Stomach (tissue), 19 donors: ENCODE measurements at regions of chr4 and their contacts with region 1.

Region 1: DNA sequence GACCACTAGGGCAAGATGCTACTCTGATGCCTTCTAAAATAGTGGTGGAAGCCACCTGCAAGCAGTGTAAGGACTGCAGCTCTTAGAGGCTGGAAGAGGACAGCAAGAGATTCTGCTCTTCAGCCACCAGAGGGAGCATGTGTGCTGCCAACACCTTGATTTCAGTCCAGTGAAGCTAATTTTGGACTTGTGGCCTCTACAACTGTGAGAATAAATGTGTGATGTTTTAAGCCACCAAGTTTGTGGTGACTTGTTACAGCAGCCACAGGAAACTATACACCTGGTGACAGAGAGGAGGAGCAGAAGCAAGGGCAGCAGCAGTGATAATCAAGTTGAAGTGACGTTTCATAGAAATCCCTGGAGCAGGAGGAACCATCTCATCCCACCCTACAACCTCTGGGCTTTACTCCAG is 55.9 kb downstream of the FGFBP1 start:
- DNase-seq: peak; percentile 39 to 90
- H3K4me3 ChIP-seq: no peak overlapping the region
- H3K27ac ChIP-seq: no peak overlapping the region
- H3K4me1 ChIP-seq: no peaks in the 10 kb centered on the region
- H3K27me3 ChIP-seq: no peaks in the 10 kb centered on the region
- CTCF ChIP-seq: peak in 5 of 7 experiments; percentile 62 to 84 (median 84)
- EP300 ChIP-seq: no peak
- POLR2A ChIP-seq: no peak

Region 2: DNA sequence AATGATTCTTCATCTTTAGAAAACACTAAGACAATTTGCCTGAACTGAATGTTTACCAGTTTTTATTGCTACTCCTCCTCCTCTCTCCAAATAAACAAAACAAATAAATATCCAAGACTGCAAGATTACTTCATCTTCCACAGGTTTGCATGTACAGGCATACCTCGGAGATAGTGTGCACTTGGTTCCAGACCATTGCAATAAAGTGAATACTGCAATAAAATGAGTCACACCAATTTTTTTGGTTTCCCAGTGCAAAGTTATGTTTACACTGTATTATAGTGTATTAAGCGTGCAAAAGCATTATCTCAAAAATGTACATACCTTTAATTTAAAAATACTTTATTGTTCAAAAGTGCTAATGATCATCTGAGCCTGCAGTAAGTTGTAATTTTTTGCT is 280.8 kb before region 1 on chr4:
- intact Hi-C with region 1: no loop called
- DNase-seq: no peak
- H3K4me3 ChIP-seq: no peak overlapping the region
- H3K27ac ChIP-seq: no peak overlapping the region
- H3K4me1 ChIP-seq: peaks cover 0 to 16% (median 3%) of the 10 kb centered on the region in 4 donors
- H3K27me3 ChIP-seq: no peaks in the 10 kb centered on the region
- CTCF ChIP-seq: no peak
- EP300 ChIP-seq: no peak
- POLR2A ChIP-seq: no peak

Region 3: GRCh38 chr4:15956179-15956850 is 73.6 kb after region 1 on chr4:
- intact Hi-C with region 1: loop called (anchors 5 kb)
- DNase-seq: peak; percentile 84 to 88
- H3K4me3 ChIP-seq: no peak overlapping the region
- H3K27ac ChIP-seq: no peak overlapping the region
- H3K4me1 ChIP-seq: peaks cover 0 to 6% (median 0%) of the 10 kb centered on the region in 4 donors
- H3K27me3 ChIP-seq: no peaks in the 10 kb centered on the region
- CTCF ChIP-seq: peak in 5 of 7 experiments; percentile 58 to 98 (median 90)
- EP300 ChIP-seq: no peak
- POLR2A ChIP-seq: no peak

Region 4: GRCh38 chr4:16270454-16271328 is 388.0 kb after region 1 on chr4:
- intact Hi-C with region 1: loop called (anchors 10 kb)
- DNase-seq: no peak
- H3K4me3 ChIP-seq: no peak overlapping the region
- H3K27ac ChIP-seq: no peak overlapping the region
- H3K4me1 ChIP-seq: peaks cover 0 to 13% (median 2%) of the 10 kb centered on the region in 4 donors
- H3K27me3 ChIP-seq: no peaks in the 10 kb centered on the region
- CTCF ChIP-seq: no peak
- EP300 ChIP-seq: no peak
- POLR2A ChIP-seq: no peak